Aorta (tissue), 5 donors: ENCODE measurements at regions of chr10 and their contacts with region 1.

Region 1: DNA sequence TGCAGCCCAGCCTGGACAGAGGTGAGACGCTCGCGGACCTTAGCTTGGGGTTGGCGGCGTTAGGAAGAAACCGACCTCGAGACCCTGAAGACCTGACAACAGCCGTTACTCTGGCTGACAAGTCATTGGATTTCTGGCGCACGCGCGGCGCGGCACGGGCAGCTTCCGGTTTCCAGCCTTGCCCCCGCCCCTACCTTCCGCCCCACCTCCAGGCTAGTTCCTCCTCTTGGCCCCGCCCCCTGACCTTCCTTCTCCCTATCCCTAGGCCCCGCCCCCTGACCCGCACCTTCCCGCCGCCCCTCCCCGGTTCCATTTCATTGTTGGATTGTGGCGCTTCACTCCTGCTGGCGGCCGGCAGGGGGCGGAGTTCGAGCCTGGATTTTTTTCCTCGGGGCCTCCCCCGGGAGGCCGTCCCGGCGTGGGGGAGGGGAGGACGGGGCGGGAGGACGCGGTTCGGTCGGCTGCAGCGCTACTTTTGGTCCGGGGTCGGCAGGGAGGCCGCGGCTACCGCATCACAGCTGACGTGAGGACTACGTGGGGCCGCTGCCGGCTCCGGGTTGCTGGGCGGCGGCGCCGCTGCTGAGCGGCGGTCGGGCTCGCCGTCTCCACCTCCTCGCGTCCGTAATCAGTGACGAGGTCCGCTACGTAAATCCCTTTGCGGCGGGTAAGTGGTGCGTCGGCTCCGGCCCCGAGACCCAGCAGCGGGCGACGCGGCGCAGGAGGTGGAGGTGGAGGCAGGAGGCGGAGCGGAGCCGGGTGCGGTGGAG is at the start of gene CREM:
- DNase-seq: peak; percentile 99 to 100
- ATAC-seq: peak; percentile 99
- H3K4me3 ChIP-seq: peak within 1 kb of the TSS; percentile 81 to 88
- H3K27ac ChIP-seq: peak within 1 kb of the TSS; percentile 94 to 100
- H3K4me1 ChIP-seq: peaks cover 0 to 4% of the 10 kb centered on the region in 2 donors
- H3K27me3 ChIP-seq: no peaks in the 10 kb centered on the region
- total RNA-seq, gene CREM: 42.5 to 52.0 TPM

Region 2: GRCh38 chr10:35090162-35090954 is 36.4 kb before region 1 on chr10 and contains the start of gene CUL2:
- intact Hi-C with region 1: loop called in 1 of 2 experiments (anchors 5 kb)
- DNase-seq: peak; percentile 95 to 97
- ATAC-seq: peak; percentile 98
- H3K4me3 ChIP-seq: peak within 1 kb of the TSS; percentile 85 to 92
- H3K27ac ChIP-seq: peak within 1 kb of the TSS in 1 of 2 donors; percentile 34
- H3K4me1 ChIP-seq: peaks cover 0 to 2% of the 10 kb centered on the region in 2 donors
- H3K27me3 ChIP-seq: no peaks in the 10 kb centered on the region
- total RNA-seq, gene CUL2: 24.3 to 28.1 TPM

Region 3: DNA sequence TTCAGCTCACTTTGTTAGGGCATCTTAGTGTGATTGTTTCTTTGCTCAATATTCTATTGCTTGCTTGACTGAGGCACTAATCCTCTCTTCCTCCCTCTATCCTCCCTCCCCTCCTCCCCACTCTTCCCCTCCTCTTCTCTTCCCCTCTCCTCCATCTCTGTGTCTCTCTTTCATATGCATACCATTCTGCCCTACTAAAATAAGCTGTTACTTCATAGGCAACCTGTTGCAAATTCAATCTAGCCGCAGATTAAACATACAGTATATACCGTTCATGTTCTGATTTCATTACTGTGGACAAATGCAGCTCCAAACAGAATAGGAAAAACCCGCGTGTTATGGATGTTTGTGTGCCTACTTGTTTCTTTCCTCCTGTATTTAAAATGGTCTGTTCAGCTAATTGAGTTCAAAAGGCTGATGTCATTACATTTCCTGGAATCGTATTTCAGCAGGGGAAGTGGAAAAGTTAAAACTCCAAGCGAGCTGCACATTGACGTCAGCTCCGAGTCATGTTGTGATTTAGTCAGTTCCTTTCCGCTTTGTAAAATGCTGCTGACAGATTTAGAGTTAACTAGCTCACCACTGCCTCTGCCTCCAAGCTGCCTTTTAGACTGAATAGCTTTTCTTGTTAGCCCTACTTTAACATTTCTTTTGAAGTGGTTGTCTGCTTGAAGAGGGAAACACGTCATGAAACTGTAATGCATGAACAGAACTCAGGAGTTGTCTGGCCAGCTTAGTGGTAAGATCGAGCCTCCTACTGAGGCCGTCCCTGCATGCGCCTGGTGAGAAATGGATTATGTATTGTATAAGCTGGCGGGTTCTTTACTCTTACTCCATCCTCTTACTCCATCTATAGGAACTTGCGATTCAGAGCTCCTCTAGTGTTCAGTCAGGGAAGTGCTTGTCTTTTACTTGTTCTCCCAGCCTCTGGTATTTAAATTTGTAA is 68.9 kb after region 1 on chr10:
- intact Hi-C with region 1: loop called (anchors 1 to 2 kb)
- DNase-seq: peak in 1 of 2 donors; percentile 81
- ATAC-seq: peak; percentile 93
- H3K4me3 ChIP-seq: peak overlapping the region; percentile 38 to 88
- H3K27ac ChIP-seq: peak overlapping the region; percentile 88 to 98
- H3K4me1 ChIP-seq: no peaks in the 10 kb centered on the region
- H3K27me3 ChIP-seq: no peaks in the 10 kb centered on the region